HEK293T (cell line): ENCODE measurements at regions of chr11 and their contacts with region 1.

Region 1: GRCh38 chr11:33742249-33742851 is 6.1 kb upstream of the CD59 start:
- DNase-seq: no peak

Region 2: GRCh38 chr11:33700425-33701271 is 41.7 kb before region 1 on chr11 and contains the start of gene C11orf91:
- CTCF ChIA-PET with region 1: interaction called, 15 read pairs
- POLR2A ChIA-PET with region 1: interaction called, 15 read pairs
- DNase-seq: peak; percentile 95

Region 3: DNA sequence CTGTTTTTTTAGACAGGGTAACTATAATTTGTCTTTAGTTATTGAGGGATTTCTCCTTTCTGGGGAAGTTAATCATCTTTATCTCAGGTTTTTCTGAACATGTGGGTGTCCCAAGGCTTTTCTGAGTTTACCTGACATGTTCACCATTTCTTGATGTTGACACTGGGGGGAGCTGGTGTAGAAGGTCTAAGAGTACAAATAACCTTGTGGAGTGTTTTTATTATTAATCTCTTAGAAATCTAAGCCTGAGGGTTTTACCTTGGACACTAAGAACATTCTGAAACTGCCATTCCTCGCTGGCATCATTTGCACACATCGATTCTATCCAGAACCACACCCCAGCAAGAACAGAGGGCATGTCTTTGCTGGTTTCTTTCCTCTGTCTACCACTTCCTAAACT is 26.1 kb before region 1 on chr11:
- CTCF ChIA-PET with region 1: interaction called, 13 read pairs
- POLR2A ChIA-PET with region 1: interaction called, 4 read pairs
- DNase-seq: no peak

Region 4: GRCh38 chr11:33802414-33802950 is 60.1 kb after region 1 on chr11:
- CTCF ChIA-PET with region 1: no interaction called
- POLR2A ChIA-PET with region 1: no interaction called
- DNase-seq: peak; percentile 79